Endothelial cell of umbilical vein (primary cell): ENCODE measurements at regions of chr2 and their contacts with region 1.

Region 1: DNA sequence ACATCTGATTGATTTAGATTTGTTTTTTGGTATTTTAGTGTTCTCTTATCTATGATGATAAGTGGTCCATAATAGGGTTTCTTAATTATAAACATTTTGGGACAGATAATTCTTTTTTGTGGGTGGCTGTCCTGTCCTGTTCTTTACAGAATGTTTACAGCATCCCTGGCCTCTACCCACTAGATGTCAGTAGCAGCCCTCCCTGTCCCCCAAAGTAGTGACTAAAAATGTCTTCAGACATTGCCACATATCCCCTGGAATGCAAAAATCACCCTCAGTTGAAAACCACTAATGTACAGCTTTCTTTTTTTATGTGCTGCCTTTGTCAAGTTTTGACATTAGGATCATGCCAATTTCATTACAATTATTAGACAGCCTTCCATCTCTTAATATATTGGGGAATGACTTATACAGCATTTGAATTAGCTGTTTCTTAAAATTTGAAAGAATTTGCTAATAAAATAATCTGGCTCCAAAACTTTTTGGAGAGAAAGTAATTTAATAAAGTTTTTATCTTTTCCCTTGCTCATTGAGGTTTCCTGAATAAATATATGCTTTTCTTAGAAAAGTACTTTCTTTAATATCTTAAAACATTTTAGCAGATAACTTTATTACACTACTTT is 19.5 kb downstream of the WIPF1 start:
- DNase-seq: peak; percentile 55
- H3K4me3 ChIP-seq: no peak overlapping the region
- H3K27ac ChIP-seq: no peak overlapping the region
- H3K4me1 ChIP-seq: no peaks in the 10 kb centered on the region
- H3K27me3 ChIP-seq: no peaks in the 10 kb centered on the region
- CTCF ChIP-seq: peak; percentile 43 to 56
- POLR2A ChIP-seq: no peak

Region 2: DNA sequence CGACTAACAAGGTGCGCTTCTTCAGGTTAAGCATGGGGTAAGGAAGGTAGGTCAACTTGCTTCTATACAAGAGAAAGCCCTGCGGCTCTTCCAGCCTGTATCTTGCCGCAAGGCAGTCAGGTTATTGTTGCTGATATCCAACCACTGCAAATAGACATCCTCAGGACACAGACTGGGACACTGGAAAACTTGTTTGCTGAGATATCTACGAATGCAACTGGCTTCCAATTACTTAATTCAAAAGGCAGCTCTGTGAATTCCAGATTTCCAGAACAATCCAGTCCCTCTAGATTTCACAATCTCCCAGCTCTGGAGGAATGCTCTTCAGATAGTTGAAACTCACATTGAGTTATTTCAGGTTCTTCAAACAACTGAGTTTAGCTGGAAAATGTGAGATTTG is 278.0 kb before region 1 on chr2:
- CTCF ChIA-PET with region 1: no interaction called
- POLR2A ChIA-PET with region 1: no interaction called
- dilution Hi-C with region 1: no loop called
- intact Hi-C with region 1: no loop called
- DNase-seq: no peak
- H3K4me3 ChIP-seq: no peak overlapping the region
- H3K27ac ChIP-seq: no peak overlapping the region
- H3K4me1 ChIP-seq: no peaks in the 10 kb centered on the region
- H3K27me3 ChIP-seq: peaks cover 0 to 7% of the 10 kb centered on the region in 2 experiments
- CTCF ChIP-seq: no peak
- POLR2A ChIP-seq: no peak

Region 3: DNA sequence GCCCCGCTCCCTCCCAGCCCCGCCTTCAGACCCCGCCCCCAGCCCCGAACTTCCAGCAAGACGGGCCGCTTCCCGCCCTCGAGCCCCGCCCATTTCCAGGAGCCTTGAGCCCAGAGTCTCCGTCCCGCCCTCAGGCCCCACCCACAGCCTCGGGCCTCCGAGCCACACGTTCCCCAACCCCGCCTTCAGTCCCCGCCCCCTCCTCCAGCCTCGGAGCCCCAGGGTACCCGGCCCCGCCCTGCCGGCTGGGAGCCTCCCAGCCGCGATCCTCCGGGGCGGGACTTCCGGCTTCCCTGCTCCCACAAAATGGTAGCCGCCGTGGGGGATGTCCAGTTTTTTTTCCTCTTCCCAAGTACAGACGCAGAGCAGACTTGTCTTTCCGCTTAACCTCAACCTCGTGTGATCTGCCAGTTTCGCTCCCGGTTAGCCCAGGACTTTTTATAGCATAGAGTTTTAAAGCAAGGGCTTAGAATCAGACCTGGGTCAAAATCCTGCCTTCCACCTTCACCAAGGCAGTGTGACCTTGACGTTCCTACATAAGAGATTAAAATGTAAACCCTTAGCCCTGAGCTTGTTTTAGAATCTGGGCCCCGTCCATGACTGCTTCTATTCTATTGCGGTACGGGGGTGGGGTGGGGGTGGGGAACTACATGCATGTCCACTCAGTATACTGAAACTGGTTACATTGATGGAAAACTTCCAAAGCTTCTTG is 90.8 kb before region 1 on chr2:
- CTCF ChIA-PET with region 1: no interaction called
- POLR2A ChIA-PET with region 1: no interaction called
- dilution Hi-C with region 1: no loop called
- intact Hi-C with region 1: no loop called
- DNase-seq: peak; percentile 98
- H3K4me3 ChIP-seq: peak overlapping the region; percentile 64 to 94 (median 84)
- H3K27ac ChIP-seq: peak overlapping the region; percentile 81
- H3K4me1 ChIP-seq: peaks cover 10% of the 10 kb centered on the region
- H3K27me3 ChIP-seq: peaks cover 1 to 4% of the 10 kb centered on the region in 2 experiments
- CTCF ChIP-seq: no peak
- POLR2A ChIP-seq: peak; percentile 86

Region 4: GRCh38 chr2:174603280-174603679 is 25.2 kb after region 1 on chr2:
- CTCF ChIA-PET with region 1: interaction called, 43 read pairs
- POLR2A ChIA-PET with region 1: no interaction called
- dilution Hi-C with region 1: no loop called
- intact Hi-C with region 1: loop called (anchors 1 kb)
- DNase-seq: peak; percentile 62
- H3K4me3 ChIP-seq: no peak overlapping the region
- H3K27ac ChIP-seq: no peak overlapping the region
- H3K4me1 ChIP-seq: peaks cover under 1% of the 10 kb centered on the region
- H3K27me3 ChIP-seq: no peaks in the 10 kb centered on the region
- CTCF ChIP-seq: peak; percentile 48 to 56
- POLR2A ChIP-seq: no peak

Region 5: GRCh38 chr2:174615871-174616436 is 37.9 kb after region 1 on chr2:
- CTCF ChIA-PET with region 1: no interaction called
- POLR2A ChIA-PET with region 1: no interaction called
- dilution Hi-C with region 1: no loop called
- intact Hi-C with region 1: no loop called
- DNase-seq: peak; percentile 54
- H3K4me3 ChIP-seq: no peak overlapping the region
- H3K27ac ChIP-seq: no peak overlapping the region
- H3K4me1 ChIP-seq: peaks cover 13% of the 10 kb centered on the region
- H3K27me3 ChIP-seq: no peaks in the 10 kb centered on the region
- CTCF ChIP-seq: no peak
- POLR2A ChIP-seq: no peak

Region 6: GRCh38 chr2:174682578-174683391 is 104.7 kb after region 1 on chr2:
- CTCF ChIA-PET with region 1: interaction called, 139 read pairs
- POLR2A ChIA-PET with region 1: no interaction called
- dilution Hi-C with region 1: no loop called
- intact Hi-C with region 1: loop called (anchors 1 kb)
- DNase-seq: peak; percentile 55
- H3K4me3 ChIP-seq: peak overlapping the region; percentile 91 to 94 (median 93)
- H3K27ac ChIP-seq: peak overlapping the region; percentile 32
- H3K4me1 ChIP-seq: peaks cover 16% of the 10 kb centered on the region
- H3K27me3 ChIP-seq: peaks cover 3 to 5% of the 10 kb centered on the region in 2 experiments
- CTCF ChIP-seq: no peak
- POLR2A ChIP-seq: no peak

Region 7: GRCh38 chr2:174688079-174688478 is 110.0 kb after region 1 on chr2:
- CTCF ChIA-PET with region 1: interaction called, 139 read pairs
- POLR2A ChIA-PET with region 1: interaction called, 9 read pairs
- dilution Hi-C with region 1: no loop called
- intact Hi-C with region 1: loop called (anchors 1 kb)
- DNase-seq: peak; percentile 53
- H3K4me3 ChIP-seq: no peak overlapping the region
- H3K27ac ChIP-seq: no peak overlapping the region
- H3K4me1 ChIP-seq: peaks cover 8% of the 10 kb centered on the region
- H3K27me3 ChIP-seq: peaks cover 3 to 10% of the 10 kb centered on the region in 2 experiments
- CTCF ChIP-seq: peak in 1 of 2 donors; percentile 15
- POLR2A ChIP-seq: no peak